ENCODE measurements at regions of chr15 and their contacts with region 1.

Region 1: GRCh38 chr15:42575188-42576039 is at the start of gene STARD9:
- DNase-seq: peak; percentile 85 to 98
- H3K4me3 ChIP-seq: peak within 1 kb of the TSS; percentile 58
- H3K27ac ChIP-seq: no peak within 1 kb of the TSS
- H3K4me1 ChIP-seq: no peaks in the 10 kb centered on the region; the same call in 1 of the 2 replicates
- H3K27me3 ChIP-seq: peaks cover 10% of the 10 kb centered on the region
- CTCF ChIP-seq: no peak
- total RNA-seq, gene STARD9: 1.7 and 2.4 TPM in 2 replicates

Region 2: DNA sequence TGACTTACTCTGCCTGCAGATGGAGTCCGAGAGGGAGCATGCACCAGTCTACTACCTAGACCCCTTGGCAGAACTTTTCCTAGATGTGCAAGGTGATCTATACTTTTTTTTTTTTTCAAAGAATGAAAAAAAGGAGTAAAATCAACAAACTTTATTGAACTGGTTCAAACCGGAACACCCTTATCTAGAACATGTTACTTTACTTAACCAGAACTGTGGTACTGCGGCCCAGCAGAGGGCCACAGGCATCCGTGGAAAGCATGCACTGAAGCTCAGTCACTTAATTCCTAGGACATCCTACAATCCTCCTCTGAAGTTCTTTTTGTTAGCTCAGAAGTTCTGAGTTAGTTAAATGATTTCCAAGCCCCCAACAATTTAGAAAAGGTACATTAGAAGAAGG is 1600.5 kb before region 1 on chr15:
- CTCF ChIA-PET with region 1: no interaction called
- POLR2A ChIA-PET with region 1: interaction called, 27 read pairs
- intact Hi-C with region 1: no loop called
- DNase-seq: no peak
- H3K4me3 ChIP-seq: no peak overlapping the region
- H3K27ac ChIP-seq: no peak overlapping the region
- H3K4me1 ChIP-seq: no peaks in the 10 kb centered on the region
- H3K27me3 ChIP-seq: no peaks in the 10 kb centered on the region
- CTCF ChIP-seq: no peak

Region 3: DNA sequence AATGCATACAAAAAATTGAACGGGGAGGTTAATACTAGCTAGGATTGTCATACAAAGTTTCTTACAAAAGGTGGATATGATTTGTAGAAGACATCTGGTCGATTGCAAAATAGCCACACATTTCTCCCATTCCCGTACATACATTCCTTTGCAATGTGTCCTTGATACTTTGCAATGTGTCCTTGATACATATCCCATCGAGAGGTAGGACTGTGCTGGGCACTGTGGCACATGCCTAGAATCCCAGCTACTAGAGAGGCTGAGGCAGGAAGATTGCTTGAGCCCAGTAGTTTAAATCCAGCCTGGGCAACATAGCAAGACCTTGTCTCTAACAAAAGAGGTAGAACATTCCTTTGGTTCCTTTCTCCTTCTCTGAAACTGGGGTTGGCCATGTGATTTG is 335.7 kb after region 1 on chr15:
- CTCF ChIA-PET with region 1: no interaction called
- POLR2A ChIA-PET with region 1: interaction called, 11 read pairs
- intact Hi-C with region 1: no loop called
- DNase-seq: no peak
- H3K4me3 ChIP-seq: no peak overlapping the region
- H3K27ac ChIP-seq: no peak overlapping the region
- H3K4me1 ChIP-seq: no peaks in the 10 kb centered on the region
- H3K27me3 ChIP-seq: no peaks in the 10 kb centered on the region
- CTCF ChIP-seq: no peak

Measured in PC-9 (cell line).